Pancreas (tissue), 10 donors: ENCODE measurements at regions of chr20 and their contacts with region 1.

Region 1: GRCh38 chr20:46014517-46015396 is 6.0 kb downstream of the MMP9 start:
- DNase-seq: no peak
- ATAC-seq: peak in 1 of 4 donors; percentile 45
- H3K4me3 ChIP-seq: no peak overlapping the region
- H3K27ac ChIP-seq: no peak overlapping the region
- H3K4me1 ChIP-seq: no peaks in the 10 kb centered on the region
- H3K27me3 ChIP-seq: peaks cover 0 to 26% (median 10%) of the 10 kb centered on the region in 4 donors
- CTCF ChIP-seq: no peak

Region 2: DNA sequence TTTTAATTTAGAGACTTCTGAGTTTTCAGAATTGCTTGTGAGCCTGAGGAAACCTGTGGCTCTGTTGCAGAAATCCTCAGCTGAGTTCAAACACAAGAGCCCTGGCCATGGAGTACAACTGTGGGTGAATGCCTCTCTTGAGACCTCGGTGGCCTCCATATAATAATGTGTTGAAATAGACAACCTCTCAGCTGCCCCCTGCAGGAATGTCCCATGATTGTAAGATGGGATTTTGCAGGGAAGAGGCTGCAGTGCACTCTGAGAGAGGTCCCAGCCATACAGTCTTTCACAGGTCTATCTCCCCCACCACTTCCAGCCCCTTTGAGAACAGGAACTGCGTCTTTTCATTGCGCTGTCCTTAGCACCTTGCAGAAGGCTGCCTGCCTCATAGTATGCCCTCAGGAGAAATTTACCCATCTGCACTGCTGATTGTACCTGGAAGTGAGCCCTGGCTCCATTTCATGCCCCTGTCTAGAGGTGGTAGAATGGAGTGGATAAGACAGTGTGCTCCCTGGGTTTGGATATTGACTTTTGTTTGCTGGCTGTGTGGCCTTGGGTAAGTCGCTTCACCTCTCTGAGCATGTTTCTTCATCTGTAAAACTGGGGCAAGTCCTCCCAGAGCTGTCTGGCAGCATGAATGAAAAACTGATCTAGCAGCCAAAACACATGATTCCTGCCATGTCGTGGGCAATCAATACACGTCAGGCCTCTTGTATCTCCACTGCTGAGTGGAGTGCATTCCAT is 310.4 kb after region 1 on chr20:
- intact Hi-C with region 1: no loop called
- DNase-seq: no peak
- ATAC-seq: peak in 3 of 4 donors; percentile 54 to 64 (median 59)
- H3K4me3 ChIP-seq: no peak overlapping the region
- H3K27ac ChIP-seq: no peak overlapping the region
- H3K4me1 ChIP-seq: peaks cover 8 to 17% (median 10%) of the 10 kb centered on the region in 3 donors
- H3K27me3 ChIP-seq: no peaks in the 10 kb centered on the region
- CTCF ChIP-seq: peak in 1 of 4 donors; percentile 20

Region 3: DNA sequence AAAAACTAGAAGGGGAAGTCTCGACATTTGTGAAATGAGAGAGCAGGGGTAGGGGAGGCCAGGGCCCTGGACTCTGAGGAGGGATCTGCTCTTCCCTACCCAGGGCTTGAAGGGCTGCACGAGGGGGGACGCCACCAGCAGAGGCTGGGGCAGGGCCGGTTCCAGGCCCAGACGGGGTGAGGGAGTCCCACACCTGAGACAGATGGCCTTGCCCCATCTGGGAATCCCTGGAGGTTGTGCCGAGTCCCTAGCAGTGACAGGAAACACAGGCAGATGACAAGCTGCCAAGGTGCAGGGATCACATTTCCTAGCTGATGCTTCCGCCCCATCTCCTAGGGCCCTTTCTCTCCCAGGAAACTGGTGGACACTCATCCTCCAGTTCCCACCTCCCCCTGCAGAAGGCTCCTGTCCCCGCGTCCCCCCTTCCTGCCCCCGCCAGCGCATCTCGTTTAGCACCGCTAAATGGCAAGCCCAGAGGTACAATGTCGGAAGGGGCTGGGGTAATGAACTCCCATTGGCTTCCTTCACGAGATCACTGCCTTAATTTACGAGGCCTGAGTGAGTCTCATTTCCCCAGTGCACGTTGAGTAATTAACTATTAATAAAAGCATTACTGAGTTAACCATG is 328.7 kb after region 1 on chr20:
- intact Hi-C with region 1: loop called in 1 of 3 experiments (anchors 5 kb)
- DNase-seq: no peak
- ATAC-seq: peak in 3 of 4 donors; percentile 18 to 39 (median 38)
- H3K4me3 ChIP-seq: no peak overlapping the region
- H3K27ac ChIP-seq: no peak overlapping the region
- H3K4me1 ChIP-seq: peaks cover 0 to 5% (median 0%) of the 10 kb centered on the region in 3 donors
- H3K27me3 ChIP-seq: no peaks in the 10 kb centered on the region
- CTCF ChIP-seq: no peak

Region 4: DNA sequence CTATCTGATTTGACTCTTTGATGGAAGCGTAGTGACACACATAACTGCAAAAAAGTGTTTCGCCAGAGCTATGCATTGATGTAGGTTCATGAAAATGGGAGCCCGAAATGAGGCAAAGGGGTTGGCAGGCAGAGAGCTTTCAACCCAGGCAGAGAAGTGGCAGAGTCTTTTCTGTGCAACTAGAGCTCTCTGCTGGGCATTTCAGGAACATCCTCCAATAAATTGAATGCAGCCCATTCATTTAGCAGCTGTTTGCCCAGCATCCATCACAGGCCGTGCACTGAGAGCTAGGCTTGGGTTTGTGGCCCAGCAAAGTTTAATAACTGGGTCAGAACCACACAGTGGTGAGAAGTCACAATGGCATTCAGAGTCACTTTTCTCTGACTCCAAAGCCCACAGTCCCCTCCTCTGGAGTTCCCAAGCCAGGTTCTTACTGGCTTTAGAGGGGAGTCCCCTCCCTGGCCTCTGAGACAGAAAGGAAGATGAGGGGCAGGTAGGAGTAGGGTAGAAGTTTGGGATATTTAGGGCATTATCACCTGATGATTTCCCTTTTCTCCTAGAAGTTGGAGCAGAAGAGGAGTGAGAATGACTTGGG is 423.5 kb after region 1 on chr20:
- intact Hi-C with region 1: no loop called
- DNase-seq: peak in 1 of 6 donors; percentile 20
- ATAC-seq: peak in 3 of 4 donors; percentile 57 to 70 (median 60)
- H3K4me3 ChIP-seq: no peak overlapping the region
- H3K27ac ChIP-seq: no peak overlapping the region
- H3K4me1 ChIP-seq: no peaks in the 10 kb centered on the region
- H3K27me3 ChIP-seq: no peaks in the 10 kb centered on the region
- CTCF ChIP-seq: no peak